Activated naive CD4-positive, alpha-beta T cell treated with anti-CD3 and anti-CD28 coated beads for 36 hours (primary cell): ENCODE measurements at regions of chr15 and their contacts with region 1.

Region 1: GRCh38 chr15:99104788-99105513 is at the start of gene SYNM:
- DNase-seq: peak; percentile 45
- H3K4me3 Mint-ChIP-seq: peak within 1 kb of the TSS; percentile 68
- H3K27ac Mint-ChIP-seq: no peak within 1 kb of the TSS
- H3K4me1 Mint-ChIP-seq: peaks cover 7% of the 10 kb centered on the region
- H3K27me3 Mint-ChIP-seq: peaks cover 45% of the 10 kb centered on the region
- total RNA-seq, gene SYNM: 1.3 to 1.4 TPM

Region 2: GRCh38 chr15:99076552-99077308 is 28.2 kb before region 1 on chr15:
- CTCF ChIA-PET with region 1: interaction called, 12 read pairs
- intact Hi-C with region 1: no loop called
- DNase-seq: peak; percentile 61
- H3K4me3 Mint-ChIP-seq: peak overlapping the region; percentile 72
- H3K27ac Mint-ChIP-seq: no peak overlapping the region
- H3K4me1 Mint-ChIP-seq: peaks cover 7% of the 10 kb centered on the region
- H3K27me3 Mint-ChIP-seq: peaks cover 9% of the 10 kb centered on the region

Region 3: DNA sequence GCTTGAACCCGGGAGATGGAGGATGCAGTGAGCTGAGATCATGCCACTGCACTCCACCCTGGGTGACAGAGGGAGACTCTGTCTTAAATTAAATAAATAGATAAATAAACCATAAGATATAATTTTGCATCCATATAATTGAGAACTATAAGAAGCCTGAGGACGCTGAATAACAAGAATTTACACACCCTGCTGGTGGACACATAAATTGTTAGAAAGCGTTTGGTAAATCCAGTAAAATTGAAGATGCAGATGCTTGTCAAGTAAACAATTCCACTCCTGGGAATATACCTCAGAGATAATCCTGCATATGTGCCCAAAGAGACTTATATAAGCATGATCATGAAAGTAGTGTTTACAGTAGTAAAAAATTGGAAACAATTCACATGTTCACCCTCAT is 102.7 kb after region 1 on chr15:
- CTCF ChIA-PET with region 1: interaction called, 33 read pairs
- intact Hi-C with region 1: no loop called
- DNase-seq: no peak
- H3K4me3 Mint-ChIP-seq: no peak overlapping the region
- H3K27ac Mint-ChIP-seq: no peak overlapping the region
- H3K4me1 Mint-ChIP-seq: no peaks in the 10 kb centered on the region
- H3K27me3 Mint-ChIP-seq: peaks cover 10% of the 10 kb centered on the region

Region 4: DNA sequence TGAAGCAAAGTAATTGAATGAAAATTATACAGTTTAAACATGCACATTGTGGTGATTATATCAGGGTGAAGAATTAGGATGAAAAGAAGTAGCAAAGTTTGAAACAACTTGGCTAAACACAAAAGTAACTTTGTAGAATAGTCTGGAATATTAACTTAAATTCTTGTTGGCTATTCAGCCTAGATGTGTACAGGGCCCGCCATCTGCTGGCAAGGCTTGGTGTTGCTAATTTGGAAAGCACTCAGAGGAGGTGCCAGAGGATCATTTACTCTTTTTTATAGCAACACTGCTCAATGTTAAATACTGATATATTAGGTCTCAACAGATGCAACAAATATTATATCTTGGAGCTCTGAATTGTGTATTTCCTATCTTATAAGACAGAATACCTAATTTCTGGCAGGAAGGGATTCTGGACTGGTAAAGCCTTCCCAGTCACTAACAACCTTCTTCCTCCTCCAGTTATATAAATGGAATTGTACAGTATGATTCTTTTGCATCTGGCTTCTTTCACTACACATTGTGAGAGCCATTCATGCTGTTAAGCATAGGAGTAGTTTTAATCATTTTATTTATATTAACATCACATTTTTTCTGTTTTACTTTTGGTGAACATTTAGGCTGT is 108.3 kb after region 1 on chr15:
- CTCF ChIA-PET with region 1: interaction called, 33 read pairs
- intact Hi-C with region 1: loop called (anchors 1 kb)
- DNase-seq: peak; percentile 85
- H3K4me3 Mint-ChIP-seq: no peak overlapping the region
- H3K27ac Mint-ChIP-seq: no peak overlapping the region
- H3K4me1 Mint-ChIP-seq: no peaks in the 10 kb centered on the region
- H3K27me3 Mint-ChIP-seq: peaks cover 5% of the 10 kb centered on the region

Region 5: DNA sequence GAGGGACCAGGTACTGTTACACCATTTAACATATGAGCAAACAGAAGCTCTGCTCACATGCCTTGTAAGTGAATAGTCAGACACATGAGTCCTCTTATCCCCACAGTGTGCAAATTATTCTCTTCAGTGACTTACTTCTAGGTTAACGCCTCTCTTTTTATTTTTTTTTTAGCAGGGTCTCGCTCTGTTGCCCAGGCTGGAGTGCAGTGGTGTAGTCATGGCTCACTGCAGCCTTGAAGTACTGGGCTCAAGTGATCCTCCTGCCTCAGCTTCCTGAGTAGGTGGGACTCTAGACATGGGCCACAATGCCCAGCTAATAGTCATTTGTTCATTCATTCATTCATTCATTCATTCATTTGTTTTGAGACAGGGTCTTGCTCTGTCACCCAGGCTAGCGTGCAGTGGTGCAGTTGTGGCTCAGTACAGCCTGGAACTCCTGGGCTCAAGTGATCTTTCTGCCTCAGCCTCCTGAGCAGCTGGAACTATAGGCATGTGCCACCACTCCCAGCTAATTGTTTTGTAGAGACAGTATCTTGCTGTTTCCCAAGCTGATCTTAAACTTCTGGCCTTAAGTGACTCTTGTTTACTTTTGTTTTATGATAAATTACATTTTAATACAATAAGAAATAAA is 241.0 kb after region 1 on chr15:
- CTCF ChIA-PET with region 1: no interaction called
- intact Hi-C with region 1: no loop called
- DNase-seq: no peak
- H3K4me3 Mint-ChIP-seq: no peak overlapping the region
- H3K27ac Mint-ChIP-seq: no peak overlapping the region
- H3K4me1 Mint-ChIP-seq: peaks cover 10% of the 10 kb centered on the region
- H3K27me3 Mint-ChIP-seq: no peaks in the 10 kb centered on the region

Region 6: GRCh38 chr15:99371180-99372103 is 266.5 kb after region 1 on chr15:
- CTCF ChIA-PET with region 1: no interaction called
- intact Hi-C with region 1: loop called (anchors 2 kb)
- DNase-seq: no peak
- H3K4me3 Mint-ChIP-seq: no peak overlapping the region
- H3K27ac Mint-ChIP-seq: peak overlapping the region; percentile 44
- H3K4me1 Mint-ChIP-seq: peaks cover 22% of the 10 kb centered on the region
- H3K27me3 Mint-ChIP-seq: no peaks in the 10 kb centered on the region

Region 7: DNA sequence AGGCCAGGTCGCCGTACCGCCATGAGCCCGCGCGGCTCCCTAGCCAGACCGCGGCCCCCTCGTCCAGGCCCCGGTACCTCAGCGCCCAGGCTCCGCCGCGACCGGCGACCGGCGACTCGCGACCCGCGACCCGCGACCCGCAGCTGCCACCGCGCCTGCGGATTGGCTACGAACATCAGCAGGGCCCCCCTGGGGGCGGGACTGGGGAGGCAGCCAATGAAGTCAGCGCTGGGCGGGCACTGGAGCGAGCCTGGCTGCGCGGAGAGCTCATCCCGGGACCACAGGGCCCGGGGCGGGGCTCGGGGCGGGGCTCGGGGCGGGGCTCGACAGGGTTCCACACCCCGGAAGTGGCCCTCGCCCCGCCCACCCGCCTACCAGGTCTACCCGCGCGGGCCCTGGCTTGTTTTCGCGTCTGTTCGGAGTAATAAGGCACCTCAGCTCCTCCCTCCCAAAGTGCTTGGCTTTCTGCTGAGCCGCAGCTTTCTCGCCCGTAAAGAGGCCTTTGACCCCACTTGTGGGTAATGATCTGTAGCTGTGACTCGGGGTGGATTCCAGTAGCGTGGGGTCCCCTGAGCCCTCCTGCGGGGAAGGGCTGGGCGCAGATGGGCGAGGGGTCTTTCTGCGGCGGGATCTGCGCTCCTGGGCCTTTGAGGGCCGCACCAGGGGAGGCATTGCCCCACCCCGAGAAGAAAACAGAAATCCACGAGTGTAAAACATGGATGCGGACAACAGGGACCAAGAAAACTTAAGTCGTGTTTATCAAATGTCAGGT is 628.5 kb after region 1 on chr15 and contains the start of gene LYSMD4:
- CTCF ChIA-PET with region 1: no interaction called
- intact Hi-C with region 1: loop called (anchors 1 kb)
- DNase-seq: peak; percentile 99
- H3K4me3 Mint-ChIP-seq: peak within 1 kb of the TSS; percentile 81
- H3K27ac Mint-ChIP-seq: peak within 1 kb of the TSS; percentile 86
- H3K4me1 Mint-ChIP-seq: peaks cover 22% of the 10 kb centered on the region
- H3K27me3 Mint-ChIP-seq: no peaks in the 10 kb centered on the region
- total RNA-seq, gene LYSMD4: 4.9 TPM